Right cardiac atrium (tissue), 5 donors: ENCODE measurements at regions of chr7 and their contacts with region 1.

Region 1: GRCh38 chr7:91351374-91351773 is 87.1 kb downstream of the FZD1 start:
- DNase-seq: no peak
- ATAC-seq: no peak
- H3K4me3 ChIP-seq: no peak overlapping the region
- H3K27ac ChIP-seq: no peak overlapping the region
- H3K4me1 ChIP-seq: peaks cover 4% of the 10 kb centered on the region
- H3K27me3 ChIP-seq: no peaks in the 10 kb centered on the region

Region 2: GRCh38 chr7:91299952-91300775 is 51.2 kb before region 1 on chr7:
- intact Hi-C with region 1: loop called in 1 of 4 experiments (anchors 10 kb)
- DNase-seq: no peak
- ATAC-seq: peak in 1 of 2 donors; percentile 44
- H3K4me3 ChIP-seq: no peak overlapping the region
- H3K27ac ChIP-seq: no peak overlapping the region
- H3K4me1 ChIP-seq: no peaks in the 10 kb centered on the region
- H3K27me3 ChIP-seq: no peaks in the 10 kb centered on the region